ENCODE measurements at regions of chr19 and their contacts with region 1.

Region 1: GRCh38 chr19:15332311-15332996 is at the start of gene BRD4:
- DNase-seq: peak; percentile 87
- ATAC-seq: peak; percentile 43
- H3K4me3 Mint-ChIP-seq: peak within 1 kb of the TSS; percentile 94
- H3K27ac Mint-ChIP-seq: peak within 1 kb of the TSS; percentile 96
- H3K4me1 Mint-ChIP-seq: peaks cover 38% of the 10 kb centered on the region
- H3K27me3 Mint-ChIP-seq: no peaks in the 10 kb centered on the region
- total RNA-seq, gene BRD4: 106 to 126 TPM

Region 2: DNA sequence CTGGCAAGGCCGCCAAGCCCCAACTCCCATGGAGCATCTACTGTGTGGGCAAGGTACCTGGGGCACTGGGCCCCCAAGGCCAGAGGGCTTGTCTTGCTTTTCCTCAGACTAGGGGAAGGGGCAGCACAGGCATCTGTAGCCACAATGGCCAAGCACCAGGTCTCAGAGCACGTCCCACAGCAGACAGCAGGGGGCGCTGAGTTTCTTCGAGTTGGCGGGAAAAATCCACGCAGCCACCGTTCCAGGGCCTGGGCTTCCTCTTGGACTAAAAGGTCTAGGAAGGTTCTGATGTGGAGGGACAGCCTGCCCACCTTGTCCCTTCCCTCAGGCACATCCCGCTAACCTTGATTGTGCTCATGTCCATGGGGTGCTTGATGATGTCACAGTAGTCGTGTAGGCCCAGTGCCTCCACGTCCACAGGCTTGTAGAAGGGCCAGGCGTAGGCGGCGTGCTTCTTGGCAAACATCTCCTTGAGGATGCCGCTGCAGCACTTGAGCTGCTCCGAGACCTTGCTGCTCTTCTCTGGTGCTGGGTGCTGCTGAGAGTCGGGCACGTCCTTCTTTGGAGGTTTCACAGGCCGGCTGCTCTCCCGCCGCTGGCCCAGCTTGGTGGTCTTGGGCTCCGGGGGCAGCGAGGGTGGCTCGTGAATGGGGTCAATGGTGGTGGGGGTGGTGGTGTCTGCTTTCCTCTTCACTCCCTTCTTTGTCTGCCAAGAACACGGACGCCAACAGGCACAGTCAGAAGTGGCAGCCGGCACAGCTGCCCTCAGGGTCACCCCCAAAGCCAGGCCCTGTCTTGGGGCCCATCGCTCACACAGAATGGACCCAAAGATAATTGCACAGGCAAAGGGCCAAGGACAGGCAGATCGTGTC is 68.2 kb before region 1 on chr19:
- CTCF ChIA-PET with region 1: interaction called, 3 read pairs
- POLR2A ChIA-PET with region 1: interaction called, 7 read pairs
- intact Hi-C with region 1: loop called (anchors 1 to 2 kb)
- DNase-seq: peak; percentile 86
- ATAC-seq: peak; percentile 77
- H3K4me3 Mint-ChIP-seq: no peak overlapping the region
- H3K27ac Mint-ChIP-seq: no peak overlapping the region
- H3K4me1 Mint-ChIP-seq: peaks cover 8% of the 10 kb centered on the region
- H3K27me3 Mint-ChIP-seq: no peaks in the 10 kb centered on the region

Region 3: GRCh38 chr19:15297416-15298224 is 34.8 kb before region 1 on chr19:
- CTCF ChIA-PET with region 1: interaction called, 5 read pairs
- POLR2A ChIA-PET with region 1: interaction called, 4 read pairs
- intact Hi-C with region 1: loop called (anchors 1 to 2 kb)
- DNase-seq: peak; percentile 55
- ATAC-seq: no peak
- H3K4me3 Mint-ChIP-seq: peak overlapping the region; percentile 30
- H3K27ac Mint-ChIP-seq: peak overlapping the region; percentile 91
- H3K4me1 Mint-ChIP-seq: peaks cover 97% of the 10 kb centered on the region
- H3K27me3 Mint-ChIP-seq: no peaks in the 10 kb centered on the region

Region 4: GRCh38 chr19:15379083-15379995 is 46.9 kb after region 1 on chr19 and contains the start of gene AKAP8:
- CTCF ChIA-PET with region 1: interaction called, 9 read pairs
- POLR2A ChIA-PET with region 1: interaction called, 34 read pairs
- intact Hi-C with region 1: loop called (anchors 1 to 5 kb)
- DNase-seq: peak; percentile 99
- ATAC-seq: peak; percentile 91
- H3K4me3 Mint-ChIP-seq: peak within 1 kb of the TSS; percentile 88
- H3K27ac Mint-ChIP-seq: peak within 1 kb of the TSS; percentile 100
- H3K4me1 Mint-ChIP-seq: peaks cover 37% of the 10 kb centered on the region
- H3K27me3 Mint-ChIP-seq: no peaks in the 10 kb centered on the region
- total RNA-seq, gene AKAP8: 47.9 to 54.3 TPM

Region 5: GRCh38 chr19:15466851-15467733 is 134.6 kb after region 1 on chr19:
- CTCF ChIA-PET with region 1: no interaction called
- POLR2A ChIA-PET with region 1: interaction called, 3 read pairs
- intact Hi-C with region 1: loop called in 1 of 2 experiments (anchors 5 kb)
- DNase-seq: peak; percentile 80
- ATAC-seq: peak; percentile 62
- H3K4me3 Mint-ChIP-seq: peak overlapping the region; percentile 47
- H3K27ac Mint-ChIP-seq: peak overlapping the region; percentile 95
- H3K4me1 Mint-ChIP-seq: peaks cover 62% of the 10 kb centered on the region
- H3K27me3 Mint-ChIP-seq: peaks cover 3% of the 10 kb centered on the region

Region 6: GRCh38 chr19:15836595-15837337 is 504.3 kb after region 1 on chr19:
- CTCF ChIA-PET with region 1: no interaction called
- POLR2A ChIA-PET with region 1: no interaction called
- intact Hi-C with region 1: loop called in 1 of 2 experiments (anchors 5 kb)
- DNase-seq: peak; percentile 96
- ATAC-seq: peak; percentile 96
- H3K4me3 Mint-ChIP-seq: peak overlapping the region; percentile 85
- H3K27ac Mint-ChIP-seq: peak overlapping the region; percentile 98
- H3K4me1 Mint-ChIP-seq: peaks cover 15% of the 10 kb centered on the region
- H3K27me3 Mint-ChIP-seq: no peaks in the 10 kb centered on the region